ENCODE measurements at regions of chr2 and their contacts with region 1.

Region 1: DNA sequence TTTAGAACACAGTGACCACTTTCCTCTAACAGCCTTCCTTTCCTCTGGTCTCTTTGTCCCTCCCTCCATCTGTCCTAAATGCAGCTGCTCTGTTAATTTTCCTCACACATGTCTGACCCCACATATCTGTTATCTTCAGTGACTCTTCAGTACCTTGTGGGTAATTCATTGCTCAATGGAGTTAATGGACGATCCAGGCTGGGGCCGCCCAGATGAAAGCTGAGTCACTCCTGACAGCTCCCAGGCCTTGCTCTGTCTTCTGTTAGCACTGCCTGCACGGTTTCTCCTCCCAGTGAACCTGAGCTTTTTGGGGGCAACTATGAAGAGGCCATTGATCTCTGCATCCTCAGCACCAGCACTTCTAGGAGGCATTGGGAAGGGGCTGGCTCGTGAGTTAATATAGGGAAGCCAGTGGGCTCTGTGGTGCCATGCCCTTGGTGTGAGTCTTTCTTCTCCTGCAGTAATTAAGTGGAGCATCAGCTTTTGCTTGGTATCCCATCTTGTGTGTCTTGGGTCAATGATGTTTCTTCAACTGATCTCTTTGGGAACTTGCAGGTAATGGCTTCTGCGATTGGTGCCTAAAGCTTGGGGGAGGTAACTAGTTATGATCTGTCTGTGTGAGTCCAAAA is 67.3 kb downstream of the SNORC start:
- DNase-seq: no peak
- H3K4me3 ChIP-seq: no peak overlapping the region
- H3K27me3 ChIP-seq: 0 out of 2 replicates have a peak, but pooled peaks cover 2% of the 10 kb centered on the region
- CTCF ChIP-seq: no peak

Region 2: DNA sequence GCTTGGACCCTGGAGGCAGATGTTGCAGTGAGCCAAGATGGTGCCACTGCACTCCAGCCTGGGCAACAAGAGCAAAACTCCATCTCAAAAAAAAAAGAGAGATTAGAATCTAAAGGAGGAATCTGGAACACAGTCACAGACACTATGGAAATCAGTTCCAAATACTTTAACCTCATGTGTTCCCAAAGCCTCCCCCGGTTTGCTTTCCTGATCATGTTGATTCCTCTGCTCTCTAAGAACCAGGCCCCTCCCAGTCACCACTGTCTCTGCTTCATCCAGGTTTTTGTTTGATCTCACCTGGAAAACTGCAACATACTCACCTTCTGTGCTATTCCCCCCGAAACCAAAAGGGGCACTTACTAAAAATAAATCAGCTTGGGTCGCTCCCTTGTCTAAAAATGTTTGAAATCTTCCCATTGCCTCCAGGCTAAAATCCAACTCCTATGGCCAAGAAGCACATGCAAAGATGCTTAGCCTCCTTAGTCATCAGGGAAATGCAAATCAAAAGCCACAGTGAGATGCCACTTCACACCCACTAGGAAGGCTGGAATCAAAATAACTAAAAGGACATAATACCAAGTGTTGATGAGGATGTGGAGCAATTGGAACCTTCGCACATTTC is 88.9 kb after region 1 on chr2:
- CTCF ChIA-PET with region 1: no interaction called
- POLR2A ChIA-PET with region 1: no interaction called
- DNase-seq: peak; percentile 40
- H3K4me3 ChIP-seq: no peak overlapping the region
- H3K27me3 ChIP-seq: no peaks in the 10 kb centered on the region; the same call in 1 of the 2 replicates
- CTCF ChIP-seq: no peak

Region 3: GRCh38 chr2:233728723-233729301 is 791.4 kb after region 1 on chr2 and contains the start of gene UGT1A3:
- CTCF ChIA-PET with region 1: no interaction called
- POLR2A ChIA-PET with region 1: interaction called, 10 read pairs
- DNase-seq: no peak
- H3K4me3 ChIP-seq: no peak within 1 kb of the TSS
- H3K27me3 ChIP-seq: no peaks in the 10 kb centered on the region
- CTCF ChIP-seq: no peak
- polyA plus RNA-seq, gene UGT1A3: not detected in 2 replicates